ENCODE measurements at regions of chrX and their contacts with region 1.

Region 1: DNA sequence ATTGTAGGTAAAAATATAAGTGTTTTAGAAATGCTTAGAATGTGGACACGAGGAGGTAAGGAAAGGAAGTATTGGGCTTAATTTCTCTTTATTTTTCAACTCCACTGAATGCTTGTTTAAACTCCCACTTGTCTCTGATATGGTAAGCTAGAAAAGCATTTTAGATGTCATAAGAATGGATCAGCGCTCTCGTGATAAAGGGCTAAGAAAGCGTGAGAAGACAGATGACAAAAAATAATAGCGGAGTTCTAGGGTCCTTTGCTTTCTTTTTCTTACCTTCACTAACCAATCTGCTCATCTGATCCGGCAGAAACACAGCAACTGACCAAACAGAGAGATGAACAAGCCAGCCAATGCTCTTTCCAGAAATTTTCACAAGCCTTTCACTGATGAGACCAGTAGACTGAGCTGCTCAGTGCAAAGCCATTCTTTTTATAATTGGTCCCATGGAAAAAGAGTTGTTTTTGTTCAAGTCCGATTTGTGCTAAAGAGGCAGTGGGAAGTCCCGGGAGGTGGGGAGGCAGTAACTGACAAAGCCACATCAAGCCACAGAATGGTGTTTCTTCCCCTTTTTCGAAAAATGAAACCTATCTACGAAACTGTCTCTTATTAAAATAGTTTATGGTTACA is at the start of gene TASL:
- DNase-seq: peak; percentile 27 to 54 (median 43)
- H3K4me3 ChIP-seq: peak within 1 kb of the TSS in 1 of 2 donors; percentile 61
- H3K4me3 Mint-ChIP-seq: peak within 1 kb of the TSS; percentile 79 to 93 (median 86)
- H3K27ac ChIP-seq: peak within 1 kb of the TSS; percentile 53
- H3K27ac Mint-ChIP-seq: peak within 1 kb of the TSS; percentile 75 to 91 (median 90)
- H3K4me1 ChIP-seq: peaks cover 5% of the 10 kb centered on the region
- H3K4me1 Mint-ChIP-seq: peaks cover 5 to 22% (median 11%) of the 10 kb centered on the region in 4 donors
- H3K27me3 ChIP-seq: no peaks in the 10 kb centered on the region
- H3K27me3 Mint-ChIP-seq: no peaks in the 10 kb centered on the region
- total RNA-seq, gene TASL: 2.8 to 3.0 TPM

Region 2: GRCh38 chrX:30652527-30653414 is 75.3 kb after region 1 on chrX:
- CTCF ChIA-PET with region 1: no interaction called
- POLR2A ChIA-PET with region 1: no interaction called
- intact Hi-C with region 1: loop called (anchors 5 kb)
- DNase-seq: peak; percentile 87 to 90 (median 89)
- H3K4me3 ChIP-seq: peak overlapping the region; percentile 89 to 90
- H3K4me3 Mint-ChIP-seq: peak overlapping the region; percentile 84 to 97 (median 92)
- H3K27ac ChIP-seq: peak overlapping the region; percentile 74
- H3K27ac Mint-ChIP-seq: peak overlapping the region; percentile 72 to 97 (median 95)
- H3K4me1 ChIP-seq: peaks cover 35% of the 10 kb centered on the region
- H3K4me1 Mint-ChIP-seq: peaks cover 19 to 52% (median 27%) of the 10 kb centered on the region in 4 donors
- H3K27me3 ChIP-seq: no peaks in the 10 kb centered on the region
- H3K27me3 Mint-ChIP-seq: no peaks in the 10 kb centered on the region

Measured in CD4-positive, alpha-beta memory T cell (primary cell).